ENCODE measurements at regions of chr18 and their contacts with region 1.

Region 1: GRCh38 chr18:24362758-24363157 is 34.9 kb downstream of the OSBPL1A start:
- DNase-seq: no peak
- H3K4me3 Mint-ChIP-seq: no peak overlapping the region
- H3K27ac Mint-ChIP-seq: no peak overlapping the region
- H3K4me1 Mint-ChIP-seq: peaks cover 13% of the 10 kb centered on the region
- H3K27me3 Mint-ChIP-seq: no peaks in the 10 kb centered on the region

Region 2: DNA sequence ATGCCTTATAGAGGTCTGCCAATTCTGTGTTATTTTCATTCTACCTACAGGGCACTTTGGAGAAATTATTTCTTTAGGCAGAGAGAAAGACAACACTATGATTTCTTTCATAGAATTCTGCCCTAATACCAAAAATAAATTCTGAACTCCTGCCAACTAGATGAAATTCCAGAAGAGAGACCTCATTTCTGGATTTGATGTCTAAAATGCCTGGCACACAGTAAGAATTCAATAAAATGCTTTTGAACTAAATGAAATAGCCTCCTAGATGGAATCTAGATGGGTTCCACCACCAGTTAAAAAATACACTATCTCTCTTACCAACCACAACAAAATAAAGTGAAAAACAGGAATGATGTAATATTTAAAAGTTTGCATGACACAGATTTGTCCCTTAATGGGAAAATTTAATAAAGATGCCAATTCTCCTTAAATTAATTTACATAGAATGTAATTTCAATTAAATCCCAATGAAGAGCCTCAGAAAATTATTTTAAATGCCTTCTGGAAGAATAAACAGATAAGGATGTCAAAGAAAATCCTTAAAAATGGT is 40.1 kb before region 1 on chr18:
- intact Hi-C with region 1: no loop called
- DNase-seq: no peak
- H3K4me3 Mint-ChIP-seq: no peak overlapping the region
- H3K27ac Mint-ChIP-seq: no peak overlapping the region
- H3K4me1 Mint-ChIP-seq: peaks cover 3% of the 10 kb centered on the region
- H3K27me3 Mint-ChIP-seq: no peaks in the 10 kb centered on the region

Region 3: GRCh38 chr18:24488824-24489493 is 126.2 kb after region 1 on chr18:
- intact Hi-C with region 1: loop called (anchors 1 kb)
- DNase-seq: peak; percentile 76
- H3K4me3 Mint-ChIP-seq: no peak overlapping the region
- H3K27ac Mint-ChIP-seq: no peak overlapping the region
- H3K4me1 Mint-ChIP-seq: peaks cover 7% of the 10 kb centered on the region
- H3K27me3 Mint-ChIP-seq: peaks cover 16% of the 10 kb centered on the region